GM12878 (cell line): ENCODE measurements at regions of chr6 and their contacts with region 1.

Region 1: DNA sequence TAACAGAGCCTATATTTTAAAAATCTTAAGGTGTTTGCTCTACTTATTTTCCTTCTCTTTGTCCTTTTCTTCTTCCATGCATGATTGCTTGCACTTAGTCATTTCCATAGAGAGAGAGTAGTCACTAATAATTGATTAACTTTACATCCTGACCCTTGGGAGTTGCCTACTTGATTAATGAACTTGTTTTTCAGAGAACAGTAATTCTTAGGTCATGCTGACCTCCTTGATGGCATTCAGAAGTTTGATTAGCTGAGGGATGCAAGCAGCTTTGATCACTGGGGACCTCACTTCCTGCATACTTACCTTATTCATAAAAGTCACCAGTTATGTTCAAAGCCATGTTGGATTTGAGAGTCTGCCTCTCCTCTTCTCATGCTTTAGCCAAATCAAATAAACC is 715.6 kb upstream of the ID4 start:
- DNase-seq: no peak
- ATAC-seq: no peak
- H3K4me3 ChIP-seq: no peak overlapping the region
- H3K27ac ChIP-seq: no peak overlapping the region
- H3K4me1 ChIP-seq: no peaks in the 10 kb centered on the region
- H3K27me3 ChIP-seq: no peaks in the 10 kb centered on the region
- CTCF ChIP-seq: no peak
- EP300 ChIP-seq: no peak
- POLR2A ChIP-seq: no peak
- RAD21 ChIP-seq: no peak

Region 2: DNA sequence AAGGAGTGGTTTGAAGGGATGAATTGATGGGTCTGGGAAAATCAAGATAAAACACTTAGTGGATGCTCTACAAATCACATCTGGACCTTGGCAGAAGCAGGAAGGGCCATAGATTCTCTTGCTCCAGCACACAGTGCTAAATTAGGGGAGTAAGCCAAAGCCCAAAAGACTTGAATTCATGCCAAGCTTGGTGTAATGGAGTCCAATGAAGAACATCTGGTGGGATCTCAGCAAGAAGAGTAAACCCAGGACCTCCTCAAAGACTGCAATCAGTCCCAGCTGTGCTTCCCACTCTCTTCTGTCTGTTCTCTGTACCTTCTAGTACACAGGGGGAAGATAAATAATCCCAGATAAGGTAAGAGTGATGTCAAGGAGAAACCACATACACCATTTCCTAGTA is 51.0 kb before region 1 on chr6:
- CTCF ChIA-PET with region 1: no interaction called
- POLR2A ChIA-PET with region 1: no interaction called
- RAD21 ChIA-PET with region 1: no interaction called
- SMC1A ChIA-PET with region 1: no interaction called
- in situ Hi-C with region 1: no loop called
- intact Hi-C with region 1: loop called (anchors 2 kb)
- DNase-seq: no peak
- ATAC-seq: no peak
- H3K4me3 ChIP-seq: no peak overlapping the region
- H3K27ac ChIP-seq: no peak overlapping the region
- H3K4me1 ChIP-seq: no peaks in the 10 kb centered on the region
- H3K27me3 ChIP-seq: no peaks in the 10 kb centered on the region
- CTCF ChIP-seq: no peak
- EP300 ChIP-seq: no peak
- POLR2A ChIP-seq: no peak
- RAD21 ChIP-seq: no peak

Region 3: GRCh38 chr6:19356692-19357091 is 235.2 kb after region 1 on chr6:
- CTCF ChIA-PET with region 1: no interaction called
- POLR2A ChIA-PET with region 1: no interaction called
- RAD21 ChIA-PET with region 1: no interaction called
- SMC1A ChIA-PET with region 1: no interaction called
- in situ Hi-C with region 1: no loop called
- intact Hi-C with region 1: no loop called
- DNase-seq: no peak
- ATAC-seq: no peak
- H3K4me3 ChIP-seq: no peak overlapping the region
- H3K27ac ChIP-seq: no peak overlapping the region
- H3K4me1 ChIP-seq: no peaks in the 10 kb centered on the region
- H3K27me3 ChIP-seq: no peaks in the 10 kb centered on the region
- CTCF ChIP-seq: no peak
- EP300 ChIP-seq: no peak
- POLR2A ChIP-seq: no peak
- RAD21 ChIP-seq: no peak

Region 4: DNA sequence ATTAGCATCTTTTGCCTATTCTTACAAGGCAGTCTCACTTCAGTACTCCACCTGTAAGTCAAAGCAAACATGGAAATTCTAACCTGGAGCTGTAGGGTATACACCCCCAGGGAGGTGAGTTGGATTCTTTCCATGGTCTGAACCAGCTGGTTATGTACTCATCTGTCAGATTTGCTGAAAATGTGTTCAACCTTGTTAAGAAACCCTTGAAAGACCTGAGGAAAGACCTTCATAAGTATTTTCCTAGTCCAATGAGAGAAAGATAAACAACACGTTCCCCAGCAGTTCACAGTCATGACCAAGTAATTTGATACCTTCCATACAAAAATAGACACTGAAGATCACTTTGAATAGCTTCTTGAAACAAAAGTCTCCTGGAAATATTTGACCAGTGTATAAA is 758.1 kb after region 1 on chr6:
- CTCF ChIA-PET with region 1: no interaction called
- POLR2A ChIA-PET with region 1: no interaction called
- RAD21 ChIA-PET with region 1: no interaction called
- SMC1A ChIA-PET with region 1: no interaction called
- in situ Hi-C with region 1: no loop called
- intact Hi-C with region 1: no loop called
- DNase-seq: no peak
- ATAC-seq: no peak
- H3K4me3 ChIP-seq: no peak overlapping the region
- H3K27ac ChIP-seq: no peak overlapping the region
- H3K4me1 ChIP-seq: no peaks in the 10 kb centered on the region
- H3K27me3 ChIP-seq: no peaks in the 10 kb centered on the region
- CTCF ChIP-seq: no peak
- EP300 ChIP-seq: no peak
- POLR2A ChIP-seq: no peak
- RAD21 ChIP-seq: no peak